Thyroid gland (tissue), 4 donors: ENCODE measurements at regions of chr5 and their contacts with region 1.

Region 1: DNA sequence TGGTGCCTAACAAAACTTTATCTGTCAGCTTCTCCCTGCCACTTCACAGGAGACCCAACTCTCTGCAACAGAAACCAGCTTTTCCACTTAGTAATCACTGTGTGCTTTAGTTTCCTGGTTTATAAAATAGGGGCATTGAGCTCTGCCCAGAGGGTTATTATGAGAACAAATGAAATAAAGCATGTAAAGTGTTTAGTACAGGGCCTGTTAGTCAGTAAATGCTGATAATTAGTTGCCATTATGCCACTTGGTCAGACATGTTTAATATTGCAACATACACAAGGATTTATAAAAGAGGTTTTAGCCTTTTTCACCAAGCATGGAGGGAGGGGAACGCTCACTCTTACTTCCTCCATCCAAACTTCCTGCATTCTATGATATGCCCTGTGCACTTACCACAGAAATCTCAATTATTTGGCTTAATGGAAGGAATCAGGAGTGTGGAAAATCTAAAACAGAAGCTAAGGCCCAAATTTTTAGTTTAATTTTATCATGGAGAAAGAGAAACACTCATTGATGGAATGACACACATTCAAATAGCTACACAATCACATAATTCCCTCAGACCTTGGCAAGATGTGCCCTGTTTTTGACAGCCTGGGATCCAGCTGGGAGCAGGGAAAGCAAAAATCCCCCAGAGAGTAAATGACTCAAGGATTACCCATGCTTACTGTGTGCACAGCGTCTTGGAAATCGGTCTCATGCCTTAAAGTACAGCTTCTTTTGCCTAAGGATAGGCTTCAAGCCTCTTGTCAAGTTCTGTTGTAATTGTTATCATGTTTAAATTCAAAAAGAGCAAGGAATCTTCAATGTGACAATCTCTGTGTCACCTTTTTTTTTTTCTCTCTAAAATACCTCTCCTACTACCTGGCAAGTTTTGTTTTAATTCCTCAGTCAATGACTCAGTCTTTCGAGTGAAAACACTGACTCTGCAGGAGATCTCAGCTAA is 34.0 kb downstream of the ZNF474 start:
- DNase-seq: peak in 1 of 2 donors; percentile 38
- H3K4me3 ChIP-seq: no peak overlapping the region
- H3K27ac ChIP-seq: peak overlapping the region; percentile 68 to 84 (median 69)
- H3K4me1 ChIP-seq: peaks cover 13 to 21% of the 10 kb centered on the region in 2 donors
- H3K27me3 ChIP-seq: no peaks in the 10 kb centered on the region
- CTCF ChIP-seq: no peak
- POLR2A ChIP-seq: no peak

Region 2: GRCh38 chr5:121681229-121681855 is 482.1 kb before region 1 on chr5:
- intact Hi-C with region 1: no loop called
- DNase-seq: no peak
- H3K4me3 ChIP-seq: no peak overlapping the region
- H3K27ac ChIP-seq: no peak overlapping the region
- H3K4me1 ChIP-seq: no peaks in the 10 kb centered on the region
- H3K27me3 ChIP-seq: no peaks in the 10 kb centered on the region
- CTCF ChIP-seq: no peak
- POLR2A ChIP-seq: no peak

Region 3: DNA sequence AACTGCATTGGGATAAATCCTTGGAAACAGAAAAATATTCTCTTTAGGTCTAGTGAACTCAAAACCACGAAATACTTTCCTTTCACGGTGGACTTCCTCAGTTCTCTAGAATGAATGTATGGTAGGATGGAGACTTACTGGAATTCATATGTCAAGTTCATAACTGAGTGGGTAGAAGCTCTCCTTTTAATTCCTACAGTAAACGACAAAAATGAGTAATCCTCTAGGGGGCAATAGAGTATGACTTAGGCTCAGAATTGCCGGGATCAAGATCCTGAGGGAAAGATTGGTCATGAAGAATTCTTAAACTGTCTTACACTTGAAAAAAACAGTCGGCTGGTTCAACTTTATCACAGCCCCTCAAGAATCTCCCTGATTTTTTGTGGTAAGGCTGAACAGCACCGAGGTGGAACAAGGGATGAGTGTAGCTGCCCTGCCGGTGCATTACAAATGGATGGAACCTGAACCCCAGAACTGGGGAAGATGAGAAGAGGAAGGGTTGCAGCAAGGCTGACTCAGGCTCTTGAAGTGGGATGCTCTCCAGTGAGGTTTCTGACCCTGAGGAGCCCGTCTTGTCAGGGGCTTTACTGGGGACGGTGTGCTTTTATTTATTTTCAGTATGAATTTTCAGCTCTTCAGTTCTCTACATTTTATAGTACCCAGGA is 71.3 kb before region 1 on chr5:
- intact Hi-C with region 1: loop called (anchors 5 kb)
- DNase-seq: no peak
- H3K4me3 ChIP-seq: no peak overlapping the region
- H3K27ac ChIP-seq: no peak overlapping the region
- H3K4me1 ChIP-seq: no peaks in the 10 kb centered on the region
- H3K27me3 ChIP-seq: no peaks in the 10 kb centered on the region
- CTCF ChIP-seq: peak in 5 of 6 experiments; percentile 38 to 79 (median 66)
- POLR2A ChIP-seq: no peak